ENCODE measurements at regions of chr6 and their contacts with region 1.

Region 1: DNA sequence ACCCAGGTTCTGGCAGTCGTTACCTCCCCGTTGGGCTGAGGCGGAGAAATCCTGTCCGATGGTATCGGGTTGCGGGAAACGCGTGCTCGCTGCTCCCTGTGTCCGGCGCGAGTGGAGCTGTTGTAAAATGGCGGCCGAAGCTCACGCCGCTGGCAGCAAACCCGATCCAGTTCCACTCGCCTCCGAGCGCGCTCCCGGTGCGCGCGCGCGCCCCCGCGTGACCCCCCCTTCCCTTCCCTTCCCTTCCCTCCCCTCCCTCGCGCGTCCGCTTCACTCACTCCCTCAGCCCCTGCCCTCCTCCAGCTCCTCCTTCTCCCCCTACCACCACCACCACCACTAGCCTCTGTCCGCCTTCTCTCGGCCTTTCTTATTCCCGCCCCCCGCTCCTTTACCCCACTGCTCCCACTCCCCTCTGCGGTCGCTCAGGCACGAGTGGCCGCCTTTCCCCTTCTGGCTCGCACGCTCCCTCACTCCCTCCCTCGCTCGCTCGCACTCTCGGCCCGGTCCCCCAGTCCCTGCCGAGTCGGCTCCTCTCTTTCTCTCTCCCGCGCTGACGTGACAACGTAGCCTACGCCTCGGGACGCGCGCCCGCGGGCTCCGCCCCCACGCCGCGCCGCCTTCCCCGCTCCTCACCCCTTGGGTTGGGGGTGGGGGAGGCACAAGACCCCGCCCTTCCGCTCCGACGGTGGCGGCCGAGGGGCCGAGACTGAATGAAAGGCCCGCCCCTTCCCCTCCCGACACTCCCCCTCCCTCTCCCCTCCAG is at the start of gene SYNCRIP:
- DNase-seq: peak; percentile 100
- total RNA-seq, gene SYNCRIP: 73.1 TPM

Region 2: GRCh38 chr6:85593438-85594196 is 49.3 kb before region 1 on chr6 and contains the start of gene SNX14:
- intact Hi-C with region 1: loop called (anchors 1 kb)
- DNase-seq: peak; percentile 98
- total RNA-seq, gene SNX14: 43.0 TPM

Region 3: DNA sequence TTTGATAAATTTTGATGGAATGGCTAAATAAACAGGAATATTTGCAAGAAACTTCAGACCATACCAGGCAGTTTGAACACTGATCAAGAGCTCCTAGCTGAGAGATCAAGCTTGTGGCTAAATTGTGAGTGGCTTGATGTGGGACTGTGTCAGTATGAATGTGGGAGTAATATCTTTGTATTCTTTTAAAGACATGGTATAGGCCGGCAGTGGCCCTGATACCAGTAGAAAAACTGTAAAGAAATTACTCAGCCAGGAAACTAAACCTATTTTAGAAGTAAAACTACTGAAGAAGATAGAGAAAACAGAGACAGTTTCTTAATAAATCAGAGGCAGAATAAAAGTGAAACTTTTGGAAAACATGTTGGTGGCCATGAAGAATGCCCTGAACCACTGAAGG is 608.2 kb after region 1 on chr6:
- intact Hi-C with region 1: no loop called
- DNase-seq: no peak